Adrenal gland (tissue), 19 donors: ENCODE measurements at regions of chr1 and their contacts with region 1.

Region 1: GRCh38 chr1:198763298-198763714 is 124.5 kb downstream of the PTPRC start:
- DNase-seq: no peak
- H3K4me3 ChIP-seq: no peak overlapping the region
- H3K27ac ChIP-seq: no peak overlapping the region
- H3K4me1 ChIP-seq: no peaks in the 10 kb centered on the region
- H3K27me3 ChIP-seq: no peaks in the 10 kb centered on the region
- CTCF ChIP-seq: no peak
- POLR2A ChIP-seq: no peak

Region 2: DNA sequence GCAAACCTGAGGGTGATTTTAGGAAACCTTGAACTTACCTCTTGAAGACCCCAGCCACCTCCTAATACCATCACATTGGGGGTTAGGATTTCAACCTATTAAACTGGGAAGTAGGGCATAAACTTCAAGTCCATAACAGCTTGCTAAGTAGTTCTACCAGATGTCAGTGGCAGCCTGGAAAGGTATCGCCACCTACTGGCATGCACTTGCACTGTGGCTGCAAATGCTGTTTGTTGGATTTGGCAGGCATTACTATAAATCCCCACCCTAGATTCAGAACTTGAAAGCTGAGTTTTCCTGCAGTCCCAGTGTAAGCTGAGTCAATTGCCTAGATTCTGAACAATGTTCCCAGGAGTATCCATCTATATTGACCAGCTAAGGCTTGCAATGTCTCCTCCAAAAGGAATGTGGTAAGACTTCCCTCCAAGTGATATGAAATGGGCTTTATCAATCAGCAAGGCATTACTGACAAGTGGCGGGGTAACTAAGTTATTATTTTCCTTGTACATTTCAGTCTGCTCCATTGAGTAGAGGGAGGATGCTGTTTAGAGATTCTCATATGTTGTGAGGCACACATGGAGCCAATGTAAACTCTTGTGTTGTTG is 350.1 kb after region 1 on chr1:
- intact Hi-C with region 1: loop called in 1 of 2 experiments (anchors 10 kb)
- DNase-seq: peak; percentile 43 to 78 (median 67)
- H3K4me3 ChIP-seq: no peak overlapping the region
- H3K27ac ChIP-seq: no peak overlapping the region
- H3K4me1 ChIP-seq: no peaks in the 10 kb centered on the region
- H3K27me3 ChIP-seq: no peaks in the 10 kb centered on the region
- CTCF ChIP-seq: peak; percentile 55 to 76 (median 67)
- POLR2A ChIP-seq: no peak